Transverse colon (tissue), 4 donors: ENCODE measurements at regions of chr2 and their contacts with region 1.

Region 1: DNA sequence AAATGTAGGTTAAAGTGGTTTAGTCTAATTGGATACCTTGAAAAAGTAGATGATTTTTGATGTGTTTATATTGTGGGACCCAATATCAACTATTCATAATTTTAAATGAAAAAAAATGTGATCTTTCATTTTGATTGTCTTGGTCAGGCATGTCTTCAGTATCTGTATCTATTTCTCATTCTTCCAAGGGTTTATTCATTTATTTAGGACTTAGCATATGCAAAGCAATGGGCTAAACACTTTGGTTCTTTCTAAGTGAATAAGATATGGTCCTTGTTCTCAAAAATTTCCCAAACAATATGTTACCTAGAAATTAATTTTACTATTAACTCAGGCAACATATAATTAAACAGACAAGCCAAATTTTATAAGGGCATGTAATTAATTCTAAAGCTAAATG is 49.1 kb downstream of the CSRNP3 start:
- DNase-seq: no peak
- H3K4me3 ChIP-seq: no peak overlapping the region
- H3K27ac ChIP-seq: no peak overlapping the region
- H3K4me1 ChIP-seq: no peaks in the 10 kb centered on the region
- H3K27me3 ChIP-seq: no peaks in the 10 kb centered on the region
- CTCF ChIP-seq: no peak
- EP300 ChIP-seq: no peak
- POLR2A ChIP-seq: no peak

Region 2: GRCh38 chr2:165499131-165499530 is 19.5 kb before region 1 on chr2:
- in situ Hi-C with region 1: no loop called
- intact Hi-C with region 1: loop called (anchors 1 kb)
- DNase-seq: no peak
- H3K4me3 ChIP-seq: no peak overlapping the region
- H3K27ac ChIP-seq: no peak overlapping the region
- H3K4me1 ChIP-seq: no peaks in the 10 kb centered on the region
- H3K27me3 ChIP-seq: no peaks in the 10 kb centered on the region
- CTCF ChIP-seq: no peak
- EP300 ChIP-seq: no peak
- POLR2A ChIP-seq: no peak

Region 3: GRCh38 chr2:165857876-165858275 is 339.3 kb after region 1 on chr2:
- in situ Hi-C with region 1: no loop called
- intact Hi-C with region 1: no loop called
- DNase-seq: no peak
- H3K4me3 ChIP-seq: no peak overlapping the region
- H3K27ac ChIP-seq: no peak overlapping the region
- H3K4me1 ChIP-seq: no peaks in the 10 kb centered on the region
- H3K27me3 ChIP-seq: no peaks in the 10 kb centered on the region
- CTCF ChIP-seq: no peak
- EP300 ChIP-seq: no peak
- POLR2A ChIP-seq: no peak